ENCODE measurements at regions of chr16 and their contacts with region 1.

Region 1: GRCh38 chr16:29973384-29974246 is at the start of gene TAOK2:
- DNase-seq: peak; percentile 98 to 100 (median 98)
- H3K4me3 ChIP-seq: peak within 1 kb of the TSS; percentile 68 to 100 (median 94)
- H3K27ac ChIP-seq: peak within 1 kb of the TSS; percentile 60 to 99 (median 93)
- H3K27me3 ChIP-seq: no peaks in the 10 kb centered on the region
- CTCF ChIP-seq: peak in 29 of 56 donors; percentile 9 to 52 (median 29)
- total RNA-seq, gene TAOK2: 58.7 to 87.3 (median 69.6) TPM

Region 2: DNA sequence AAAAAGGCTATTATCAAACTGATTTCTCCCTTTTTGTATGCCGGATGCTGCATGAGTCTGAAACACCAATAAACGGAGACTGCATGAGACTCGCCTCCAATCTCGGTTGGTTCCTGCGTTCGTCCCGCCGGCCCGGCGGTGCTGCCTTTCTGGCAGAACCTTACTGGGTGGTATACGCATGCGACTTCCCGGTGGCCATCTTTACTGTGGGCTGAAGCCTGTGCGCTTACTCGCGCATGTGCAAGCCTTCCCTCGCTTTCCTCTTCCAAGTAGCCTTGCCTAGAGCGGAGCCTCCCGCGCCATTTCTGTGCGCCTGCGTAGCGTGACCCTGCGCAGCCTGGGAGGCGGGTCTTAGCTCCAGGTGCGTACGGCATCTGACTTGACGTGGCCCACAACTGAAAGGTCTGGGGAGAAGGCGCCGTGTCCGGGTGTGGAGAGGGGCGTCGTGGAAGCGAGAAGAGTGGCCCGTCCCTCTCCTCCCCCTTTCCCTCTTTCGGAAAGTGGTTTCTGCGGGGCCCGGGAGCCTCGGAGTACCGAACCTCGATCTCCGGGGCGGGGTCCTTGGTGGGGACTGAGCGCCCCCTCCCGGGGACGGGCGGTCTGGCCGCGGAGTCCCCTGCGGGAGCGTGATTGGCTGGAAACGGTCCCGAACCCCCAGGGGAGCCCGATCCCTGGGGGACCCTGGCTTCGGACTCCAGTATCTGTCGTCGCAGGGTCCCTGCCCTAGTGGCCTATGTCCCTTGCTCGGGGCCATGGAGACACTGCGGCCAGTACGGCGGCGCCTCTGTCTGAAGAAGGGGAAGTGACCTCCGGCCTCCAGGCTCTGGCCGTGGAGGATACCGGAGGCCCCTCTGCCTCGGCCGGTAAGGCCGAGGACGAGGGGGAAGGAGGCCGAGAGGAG is 157.6 kb before region 1 on chr16 and contains the start of gene PAGR1:
- intact Hi-C with region 1: loop called in 1 of 2 experiments (anchors 5 kb)
- DNase-seq: peak; percentile 96 to 99 (median 98)
- H3K4me3 ChIP-seq: peak within 1 kb of the TSS; percentile 64 to 97 (median 84)
- H3K27ac ChIP-seq: peak within 1 kb of the TSS; percentile 79 to 99 (median 97)
- H3K27me3 ChIP-seq: no peaks in the 10 kb centered on the region
- CTCF ChIP-seq: peak; percentile 63 to 98 (median 88)
- total RNA-seq, gene PAGR1: 16.6 to 44.6 (median 24.7) TPM

Region 3: DNA sequence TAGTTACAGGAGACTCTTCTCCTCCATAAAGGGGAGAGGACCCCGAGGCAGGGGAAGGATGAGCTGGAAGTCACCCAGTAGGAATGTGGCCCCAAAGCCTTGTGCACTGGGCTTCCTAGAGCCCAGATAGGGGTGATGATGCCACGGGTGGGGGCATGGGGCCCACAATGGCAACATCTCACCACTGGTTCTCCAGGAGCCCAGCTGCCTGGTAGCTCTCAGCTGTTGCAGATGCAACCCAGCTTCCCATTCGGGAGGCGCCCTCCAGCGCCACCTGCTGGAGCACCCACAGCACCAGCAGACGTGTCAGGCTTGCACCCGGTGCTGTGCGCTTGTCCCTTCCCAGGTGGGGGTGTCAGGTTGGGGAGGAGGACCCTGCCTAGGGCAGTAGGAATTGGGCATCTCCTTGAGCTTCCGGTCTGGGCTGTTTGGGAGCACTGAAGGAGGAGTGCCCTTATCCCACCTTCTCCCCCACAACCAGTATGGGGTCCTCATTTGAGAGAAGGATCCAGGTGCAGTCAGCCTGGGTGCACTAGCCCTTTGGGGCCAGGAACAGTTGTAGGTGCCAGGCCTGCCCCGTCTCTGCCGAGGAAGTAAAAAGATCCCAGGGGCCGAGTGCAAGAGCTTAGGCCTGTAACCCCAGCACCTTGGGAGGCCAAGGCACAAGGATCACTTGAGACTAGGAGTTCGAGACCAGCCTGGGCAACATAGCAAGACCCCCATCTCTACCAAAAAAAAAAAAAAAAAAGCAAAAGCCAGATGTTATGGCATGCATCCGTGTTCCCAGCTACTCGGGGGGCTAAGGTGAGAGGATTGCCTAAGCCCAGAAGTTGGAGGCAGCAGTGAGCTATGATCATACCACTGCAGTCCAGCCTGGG is 125.0 kb before region 1 on chr16:
- intact Hi-C with region 1: no loop called
- DNase-seq: peak; percentile 56 to 84 (median 74)
- H3K4me3 ChIP-seq: no peak overlapping the region
- H3K27ac ChIP-seq: peak overlapping the region in 46 of 59 donors; percentile 1 to 78 (median 52)
- H3K27me3 ChIP-seq: no peaks in the 10 kb centered on the region
- CTCF ChIP-seq: peak; percentile 37 to 96 (median 85)

Region 4: DNA sequence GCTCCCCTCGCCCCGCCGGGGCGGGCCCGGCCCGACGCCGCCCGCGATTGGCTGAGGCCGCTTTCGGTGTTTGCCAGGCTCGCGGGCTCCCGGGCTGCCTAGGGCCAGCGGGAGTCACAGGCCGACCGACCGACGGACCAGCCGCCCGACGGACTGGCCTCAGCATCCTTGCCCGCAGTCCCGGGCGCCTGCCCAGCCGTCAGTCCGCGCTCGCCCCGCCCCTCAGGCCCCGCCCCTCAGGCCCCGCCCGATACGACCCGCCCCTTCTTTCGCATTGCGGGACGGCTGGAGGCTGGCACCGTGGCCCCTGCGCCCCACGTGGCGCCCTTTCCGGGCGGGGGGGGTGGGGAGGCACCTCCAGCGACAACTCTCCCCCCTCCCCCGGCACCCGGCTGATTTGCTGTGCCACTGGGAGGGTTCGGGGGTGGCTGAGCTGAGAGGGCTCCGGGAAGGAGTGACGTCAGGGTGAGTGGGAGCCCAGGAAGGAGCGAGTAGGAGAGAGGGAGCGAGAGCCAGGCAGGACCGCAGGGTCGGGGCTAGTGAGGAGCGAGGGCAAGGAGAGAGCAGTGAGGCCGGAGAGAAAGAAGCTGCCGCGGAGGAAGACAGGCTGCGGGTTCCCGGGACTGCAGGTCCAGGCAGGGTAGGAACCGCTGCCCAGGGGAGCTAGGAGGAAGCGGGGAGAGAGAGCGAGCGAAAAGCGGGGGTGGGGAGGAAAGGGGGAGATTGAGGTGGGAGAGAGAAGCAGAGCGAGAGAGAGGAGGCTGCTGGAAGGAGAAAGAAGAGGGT is 73.3 kb before region 1 on chr16 and contains the start of gene ASPHD1:
- intact Hi-C with region 1: loop called in 1 of 2 experiments (anchors 1 kb)
- DNase-seq: peak; percentile 78 to 97 (median 92)
- H3K4me3 ChIP-seq: peak within 1 kb of the TSS; percentile 52 to 87 (median 72)
- H3K27ac ChIP-seq: peak within 1 kb of the TSS in 58 of 59 donors; percentile 70 to 98 (median 92)
- H3K27me3 ChIP-seq: no peaks in the 10 kb centered on the region
- CTCF ChIP-seq: peak in 3 of 56 donors; percentile 2 to 20 (median 19)
- total RNA-seq, gene ASPHD1: 60.7 to 127 (median 92.5) TPM

Region 5: GRCh38 chr16:29961479-29962343 is 11.9 kb before region 1 on chr16 and contains the start of gene TMEM219:
- intact Hi-C with region 1: loop called (anchors 1 kb)
- DNase-seq: peak; percentile 82 to 97 (median 86)
- H3K4me3 ChIP-seq: peak within 1 kb of the TSS; percentile 59 to 98 (median 88)
- H3K27ac ChIP-seq: peak within 1 kb of the TSS; percentile 63 to 99 (median 97)
- H3K27me3 ChIP-seq: no peaks in the 10 kb centered on the region
- CTCF ChIP-seq: peak in 53 of 56 donors; percentile 17 to 74 (median 51)
- total RNA-seq, gene TMEM219: 63.3 to 177 (median 99.3) TPM

Measured in dorsolateral prefrontal cortex (tissue), 120 donors.